Heart left ventricle (tissue), 16 donors: ENCODE measurements at regions of chr1 and their contacts with region 1.

Region 1: DNA sequence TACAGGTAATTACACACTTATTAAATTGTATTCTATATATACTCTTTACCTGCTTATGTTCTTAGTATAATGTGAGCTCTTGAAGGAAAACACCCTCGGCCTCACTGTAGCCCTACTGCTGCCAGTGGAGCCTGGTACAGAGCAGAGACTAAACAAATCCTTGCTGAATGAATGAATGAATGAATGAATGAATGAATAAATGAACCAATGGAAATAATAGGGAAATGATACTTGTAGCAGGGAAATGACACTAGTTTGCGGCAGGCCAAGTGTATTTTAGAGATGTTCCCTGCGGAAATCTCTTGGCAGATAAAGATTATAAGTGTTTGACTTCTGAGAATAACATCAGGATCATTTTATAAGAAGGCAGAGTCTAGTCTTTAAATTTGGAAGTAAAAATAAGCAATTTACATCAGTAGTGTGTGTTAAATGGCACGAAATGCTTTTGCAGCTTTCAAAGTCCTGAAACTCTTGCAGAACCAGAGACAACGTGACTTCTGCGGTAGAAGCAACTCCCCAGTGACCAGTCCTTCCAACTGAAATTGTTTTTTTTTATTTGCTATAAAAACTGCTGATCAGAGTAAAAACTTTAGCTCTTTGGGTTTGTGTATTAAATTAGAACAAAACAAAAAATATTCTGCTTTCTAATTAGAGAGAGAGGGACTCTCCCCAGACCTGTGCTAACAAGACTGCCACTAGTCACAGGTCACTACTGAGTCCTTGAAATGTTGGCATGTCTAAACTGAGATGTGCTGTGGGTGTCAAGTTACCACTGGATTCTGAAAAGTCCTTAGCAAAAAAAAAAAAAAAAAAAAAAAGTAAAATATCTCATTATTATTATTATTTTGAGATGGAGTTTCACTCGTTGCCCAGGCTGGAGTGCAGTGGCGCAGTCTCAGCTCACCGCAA is 199.3 kb upstream of the MAP1LC3C start:
- DNase-seq: no peak
- ATAC-seq: no peak
- H3K4me3 ChIP-seq: no peak overlapping the region
- H3K27ac ChIP-seq: no peak overlapping the region
- H3K4me1 ChIP-seq: no peaks in the 10 kb centered on the region
- H3K27me3 ChIP-seq: no peaks in the 10 kb centered on the region
- CTCF ChIP-seq: no peak
- POLR2A ChIP-seq: no peak

Region 2: DNA sequence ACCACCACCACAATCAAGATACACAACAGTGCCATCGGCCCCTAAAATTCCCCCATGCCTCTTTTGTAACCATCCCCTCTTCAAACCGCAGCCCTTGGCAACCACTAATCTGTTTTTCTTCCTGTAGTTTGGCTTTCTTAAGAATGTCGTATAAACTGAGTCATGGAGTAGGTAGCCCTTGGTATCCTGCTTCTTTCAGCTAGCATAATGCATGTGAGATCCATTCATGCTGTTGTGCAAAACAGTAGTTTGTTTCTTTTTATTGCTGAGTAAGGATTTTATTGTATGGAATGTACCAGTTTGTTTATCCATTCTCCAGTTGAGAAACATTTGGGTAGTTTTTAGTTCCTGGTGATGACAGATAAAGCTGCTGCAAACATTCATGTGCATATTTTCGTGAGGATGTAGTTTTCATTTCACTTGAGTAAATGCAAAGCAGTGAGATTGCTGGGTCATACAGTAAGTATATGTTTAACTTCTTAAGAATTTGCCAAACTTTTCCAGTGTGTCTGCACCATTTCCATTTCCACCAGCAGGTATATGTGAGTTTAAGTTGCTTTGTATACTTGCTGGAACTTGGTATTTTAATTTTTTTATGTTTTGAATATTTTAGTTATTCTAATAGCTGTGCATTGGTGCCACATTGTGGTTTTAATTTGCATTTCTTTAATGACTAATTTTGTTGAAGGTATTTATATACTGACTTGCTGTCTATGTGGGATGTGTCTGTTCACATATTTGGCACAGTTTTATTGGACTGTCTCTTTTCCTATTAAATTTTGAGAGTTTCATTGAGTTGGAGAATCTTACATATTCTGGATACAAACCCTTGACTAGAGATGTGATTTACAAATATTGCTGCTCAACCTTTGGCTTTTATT is 50.8 kb before region 1 on chr1:
- intact Hi-C with region 1: loop called in 1 of 10 experiments (anchors 2 kb)
- DNase-seq: no peak
- ATAC-seq: no peak
- H3K4me3 ChIP-seq: peak overlapping the region in 2 of 12 donors; percentile 13
- H3K27ac ChIP-seq: no peak overlapping the region
- H3K4me1 ChIP-seq: no peaks in the 10 kb centered on the region
- H3K27me3 ChIP-seq: no peaks in the 10 kb centered on the region
- CTCF ChIP-seq: no peak
- POLR2A ChIP-seq: no peak

Region 3: DNA sequence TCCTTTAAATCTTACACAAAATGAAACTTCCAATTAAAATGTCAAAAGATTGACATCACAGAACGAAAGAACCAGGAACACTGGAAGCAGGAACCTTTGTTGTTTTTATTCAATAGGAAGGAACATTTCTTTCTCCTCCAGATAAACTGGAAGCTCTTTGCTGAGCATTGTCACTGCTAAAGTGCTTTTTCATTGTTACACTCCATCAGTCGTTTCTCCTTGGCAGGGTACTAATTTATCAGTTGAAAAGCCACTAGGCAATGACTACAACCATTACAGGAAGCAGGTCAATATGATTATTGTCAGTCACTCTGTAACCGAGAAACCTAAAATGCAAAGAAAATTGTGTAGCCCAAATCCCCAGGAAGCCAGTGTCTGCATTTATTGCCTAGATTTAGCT is 36.0 kb before region 1 on chr1:
- intact Hi-C with region 1: no loop called
- DNase-seq: no peak
- ATAC-seq: no peak
- H3K4me3 ChIP-seq: no peak overlapping the region
- H3K27ac ChIP-seq: no peak overlapping the region
- H3K4me1 ChIP-seq: no peaks in the 10 kb centered on the region
- H3K27me3 ChIP-seq: no peaks in the 10 kb centered on the region
- CTCF ChIP-seq: no peak
- POLR2A ChIP-seq: no peak

Region 4: GRCh38 chr1:242428399-242429190 is 230.4 kb after region 1 on chr1:
- intact Hi-C with region 1: no loop called
- DNase-seq: no peak
- ATAC-seq: no peak
- H3K4me3 ChIP-seq: no peak overlapping the region
- H3K27ac ChIP-seq: no peak overlapping the region
- H3K4me1 ChIP-seq: no peaks in the 10 kb centered on the region
- H3K27me3 ChIP-seq: no peaks in the 10 kb centered on the region
- CTCF ChIP-seq: no peak
- POLR2A ChIP-seq: no peak